ENCODE measurements at regions of chr9 and their contacts with region 1.

Region 1: DNA sequence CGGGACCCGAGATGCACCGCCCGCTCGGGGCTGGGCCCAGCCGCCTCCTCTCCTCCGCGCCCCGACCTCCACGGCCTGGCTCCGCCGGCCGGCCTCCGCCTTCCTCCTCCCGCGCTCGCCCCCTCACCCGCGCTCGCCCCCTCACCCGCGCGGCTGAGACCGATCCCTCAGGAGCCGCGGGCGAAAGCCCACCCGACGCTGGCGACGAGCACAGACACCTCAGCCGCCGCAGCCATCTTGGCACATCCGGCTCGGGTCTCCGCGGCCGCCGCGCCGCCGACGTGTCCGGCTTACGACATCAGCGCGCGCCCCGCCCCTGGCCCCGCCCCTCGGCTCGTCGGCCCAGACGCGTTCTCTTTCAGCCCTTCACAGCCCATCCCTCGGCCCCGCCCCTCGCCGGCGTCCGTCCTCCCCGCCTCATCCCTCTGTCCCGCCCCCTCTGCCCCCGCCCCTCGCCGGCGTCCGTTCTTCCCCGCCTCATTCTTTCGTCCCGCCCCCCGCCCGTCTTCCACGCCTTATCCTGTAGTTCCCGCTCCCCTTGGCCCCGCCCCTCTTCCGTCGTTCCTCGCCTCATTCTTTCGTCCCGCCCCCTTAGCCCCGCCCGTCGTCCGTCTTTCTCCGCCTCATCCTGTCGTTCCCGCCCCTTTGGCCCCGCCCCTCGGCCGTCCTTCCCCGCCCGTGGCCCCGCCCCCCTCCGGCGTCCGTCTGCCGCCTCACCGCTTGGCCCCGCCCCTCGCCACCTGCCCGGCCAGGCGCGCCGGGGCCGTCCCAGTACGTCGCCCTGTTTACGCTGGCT is at the start of gene SEC16A:
- H3K4me3 Mint-ChIP-seq: peak within 1 kb of the TSS; percentile 98
- H3K27ac Mint-ChIP-seq: peak within 1 kb of the TSS; percentile 99
- H3K4me1 Mint-ChIP-seq: peaks cover 35% of the 10 kb centered on the region
- H3K27me3 Mint-ChIP-seq: peaks cover 20% of the 10 kb centered on the region

Region 2: GRCh38 chr9:136400038-136400834 is 82.8 kb before region 1 on chr9 and contains the start of gene SNAPC4:
- intact Hi-C with region 1: loop called (anchors 10 kb)
- H3K4me3 Mint-ChIP-seq: peak within 1 kb of the TSS; percentile 86
- H3K27ac Mint-ChIP-seq: peak within 1 kb of the TSS; percentile 62
- H3K4me1 Mint-ChIP-seq: peaks cover 34% of the 10 kb centered on the region
- H3K27me3 Mint-ChIP-seq: no peaks in the 10 kb centered on the region

Region 3: GRCh38 chr9:136439550-136440408 is 43.2 kb before region 1 on chr9 and contains the start of gene INPP5E:
- intact Hi-C with region 1: no loop called
- H3K4me3 Mint-ChIP-seq: peak within 1 kb of the TSS; percentile 76
- H3K27ac Mint-ChIP-seq: peak within 1 kb of the TSS; percentile 60
- H3K4me1 Mint-ChIP-seq: peaks cover 29% of the 10 kb centered on the region
- H3K27me3 Mint-ChIP-seq: peaks cover 3% of the 10 kb centered on the region

Region 4: DNA sequence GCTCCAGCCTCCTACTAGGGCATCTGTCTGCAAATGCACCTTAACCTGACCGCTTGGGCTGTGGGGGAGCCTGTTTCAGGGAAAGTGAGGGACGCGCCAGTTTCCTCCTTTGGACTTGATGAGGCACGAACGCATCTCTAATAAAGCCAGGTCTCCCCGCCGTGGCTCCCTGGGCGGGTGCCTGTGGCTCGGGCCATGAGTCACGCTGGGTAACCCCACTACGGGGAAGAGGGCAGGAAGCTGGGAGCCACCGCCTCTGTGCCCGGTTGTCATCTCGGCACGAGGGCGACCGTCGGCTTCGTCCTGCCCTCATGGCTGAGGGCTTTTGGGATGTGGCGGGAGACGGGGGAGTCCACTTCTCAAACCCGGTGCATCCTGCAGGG is 50.8 kb after region 1 on chr9:
- intact Hi-C with region 1: loop called (anchors 5 kb)
- H3K4me3 Mint-ChIP-seq: peak overlapping the region; percentile 45
- H3K27ac Mint-ChIP-seq: peak overlapping the region; percentile 75
- H3K4me1 Mint-ChIP-seq: peaks cover 71% of the 10 kb centered on the region
- H3K27me3 Mint-ChIP-seq: peaks cover 19% of the 10 kb centered on the region

Region 5: GRCh38 chr9:136631038-136632000 is 148.3 kb after region 1 on chr9:
- intact Hi-C with region 1: loop called (anchors 1 kb)
- H3K4me3 Mint-ChIP-seq: no peak overlapping the region
- H3K27ac Mint-ChIP-seq: no peak overlapping the region
- H3K4me1 Mint-ChIP-seq: peaks cover 5% of the 10 kb centered on the region
- H3K27me3 Mint-ChIP-seq: peaks cover 43% of the 10 kb centered on the region